ENCODE measurements at regions of chr19 and their contacts with region 1.

Region 1: DNA sequence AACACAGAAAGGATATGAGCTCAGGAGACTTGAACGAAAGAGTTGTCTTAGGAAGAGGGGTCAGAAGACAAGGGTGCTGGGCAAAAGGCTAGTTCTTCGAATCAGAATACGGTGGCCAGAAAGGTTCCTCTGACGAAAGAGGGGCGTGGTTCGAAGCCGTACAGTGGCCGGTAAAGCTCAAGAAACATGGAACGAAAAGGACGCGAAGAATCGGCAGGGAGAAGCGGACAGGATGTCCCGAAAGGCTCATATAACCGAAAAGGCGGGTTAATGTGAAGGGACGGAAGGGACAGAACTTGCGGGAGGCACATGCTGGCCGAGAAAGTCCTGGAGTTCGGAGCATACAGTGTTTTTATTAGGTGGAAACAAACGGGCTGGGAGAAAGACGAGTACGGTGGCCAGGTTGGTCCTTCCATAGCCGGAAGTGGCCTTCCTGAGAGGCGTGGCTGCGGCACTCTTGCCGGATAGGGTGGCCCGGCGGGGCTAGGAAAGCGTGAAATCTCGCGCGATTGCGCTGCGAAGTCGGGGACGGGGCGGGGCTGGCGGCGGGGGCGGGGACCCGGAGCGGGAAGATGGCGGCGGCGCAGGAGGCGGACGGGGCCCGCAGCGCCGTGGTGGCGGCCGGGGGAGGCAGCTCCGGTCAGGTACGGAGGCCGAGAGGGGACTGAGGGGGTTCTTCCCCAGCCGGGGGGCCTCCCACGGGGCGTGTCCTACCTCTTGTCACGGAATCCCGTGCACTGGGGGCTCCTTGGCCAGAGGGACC is at the start of gene CLPTM1:
- DNase-seq: peak; percentile 95
- ATAC-seq: peak; percentile 93
- H3K4me3 ChIP-seq: peak within 1 kb of the TSS; percentile 71 to 85
- H3K27ac ChIP-seq: peak within 1 kb of the TSS; percentile 98
- H3K4me1 ChIP-seq: peaks cover 11 to 34% of the 10 kb centered on the region in 2 experiments; a peak in 3 of 4 replicates
- H3K27me3 ChIP-seq: no peaks in the 10 kb centered on the region
- CTCF ChIP-seq: no peak
- POLR2A ChIP-seq: peak; percentile 93
- RAD21 ChIP-seq: no peak
- total RNA-seq, gene CLPTM1: 102 TPM

Region 2: GRCh38 chr19:44582581-44583265 is 372.3 kb before region 1 on chr19:
- CTCF ChIA-PET with region 1: no interaction called
- POLR2A ChIA-PET with region 1: no interaction called
- RAD21 ChIA-PET with region 1: no interaction called
- intact Hi-C with region 1: loop called (anchors 10 kb)
- DNase-seq: peak; percentile 36
- ATAC-seq: peak; percentile 88
- H3K4me3 ChIP-seq: no peak overlapping the region
- H3K27ac ChIP-seq: no peak overlapping the region
- H3K4me1 ChIP-seq: peaks cover 2 to 17% of the 10 kb centered on the region in 2 experiments
- H3K27me3 ChIP-seq: no peaks in the 10 kb centered on the region
- CTCF ChIP-seq: peak; percentile 40 to 98 (median 94); a peak in 5 of 6 replicates
- POLR2A ChIP-seq: no peak
- RAD21 ChIP-seq: peak; percentile 57

Region 3: DNA sequence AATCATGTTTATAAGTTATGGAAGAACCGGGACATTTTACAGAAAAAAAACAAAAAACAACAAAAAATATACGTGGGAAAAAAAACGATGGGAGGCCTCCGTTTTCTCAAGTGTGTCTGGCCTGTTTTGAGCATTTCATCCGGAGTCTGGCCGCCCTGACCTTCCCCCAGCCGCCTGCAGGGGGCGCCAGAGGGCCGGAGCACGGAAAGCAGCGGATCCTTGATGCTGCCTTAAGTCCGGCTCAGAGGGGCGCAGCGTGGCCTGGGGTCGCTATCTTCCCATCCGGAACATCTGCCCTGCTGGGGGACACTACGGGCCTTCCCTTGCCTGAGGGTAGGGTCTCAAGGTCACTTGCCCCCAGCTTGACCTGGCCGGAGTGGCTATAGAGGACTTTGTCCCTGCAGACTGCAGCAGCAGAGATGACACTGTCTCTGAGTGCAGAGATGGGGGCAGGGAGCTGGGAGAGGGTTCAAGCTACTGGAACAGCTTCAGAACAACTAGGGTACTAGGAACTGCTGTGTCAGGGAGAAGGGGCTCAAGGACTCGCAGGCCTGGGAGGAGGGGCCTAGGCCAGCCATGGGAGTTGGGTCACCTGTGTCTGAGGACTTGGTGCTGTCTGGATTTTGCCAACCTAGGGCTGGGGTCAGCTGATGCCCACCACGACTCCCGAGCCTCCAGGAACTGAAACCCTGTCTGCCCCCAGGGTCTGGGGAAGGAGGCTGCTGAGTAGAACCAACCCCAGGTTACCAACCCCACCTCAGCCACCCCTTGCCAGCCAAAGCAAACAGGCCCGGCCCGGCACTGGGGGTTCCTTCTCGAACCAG is 51.2 kb before region 1 on chr19:
- CTCF ChIA-PET with region 1: interaction called, 9 read pairs
- POLR2A ChIA-PET with region 1: interaction called, 4 read pairs
- RAD21 ChIA-PET with region 1: interaction called in 1 of 2 experiments, 3 read pairs
- intact Hi-C with region 1: loop called (anchors 1 kb)
- DNase-seq: no peak
- ATAC-seq: peak; percentile 61
- H3K4me3 ChIP-seq: no peak overlapping the region
- H3K27ac ChIP-seq: peak overlapping the region; percentile 37
- H3K4me1 ChIP-seq: peaks cover 4 to 32% of the 10 kb centered on the region in 2 experiments; a peak in 3 of 4 replicates
- H3K27me3 ChIP-seq: no peaks in the 10 kb centered on the region
- CTCF ChIP-seq: peak; percentile 80 to 98 (median 97)
- POLR2A ChIP-seq: no peak
- RAD21 ChIP-seq: peak; percentile 89

Region 4: GRCh38 chr19:44912854-44913253 is 42.2 kb before region 1 on chr19:
- CTCF ChIA-PET with region 1: interaction called, 3 read pairs
- POLR2A ChIA-PET with region 1: interaction called, 4 read pairs
- RAD21 ChIA-PET with region 1: no interaction called
- intact Hi-C with region 1: loop called (anchors 2 kb)
- DNase-seq: no peak
- ATAC-seq: no peak
- H3K4me3 ChIP-seq: no peak overlapping the region
- H3K27ac ChIP-seq: no peak overlapping the region
- H3K4me1 ChIP-seq: peaks cover 21 to 40% of the 10 kb centered on the region in 2 experiments
- H3K27me3 ChIP-seq: no peaks in the 10 kb centered on the region
- CTCF ChIP-seq: no peak
- POLR2A ChIP-seq: no peak
- RAD21 ChIP-seq: no peak

Region 5: GRCh38 chr19:45047188-45047797 is 92.3 kb after region 1 on chr19:
- CTCF ChIA-PET with region 1: no interaction called
- POLR2A ChIA-PET with region 1: no interaction called
- RAD21 ChIA-PET with region 1: no interaction called
- intact Hi-C with region 1: no loop called
- DNase-seq: no peak
- ATAC-seq: no peak
- H3K4me3 ChIP-seq: no peak overlapping the region
- H3K27ac ChIP-seq: no peak overlapping the region
- H3K4me1 ChIP-seq: peaks cover 7 to 27% of the 10 kb centered on the region in 2 experiments
- H3K27me3 ChIP-seq: no peaks in the 10 kb centered on the region
- CTCF ChIP-seq: no peak
- POLR2A ChIP-seq: no peak
- RAD21 ChIP-seq: no peak

Measured in HCT116 (cell line).